ENCODE measurements at regions of chr6 and their contacts with region 1.

Region 1: GRCh38 chr6:36027501-36028087 is at the start of gene MAPK14:
- DNase-seq: peak; percentile 95 to 100 (median 99)

Region 2: GRCh38 chr6:36067374-36068011 is 39.9 kb after region 1 on chr6:
- intact Hi-C with region 1: no loop called
- DNase-seq: no peak

Region 3: GRCh38 chr6:36094753-36095496 is 67.3 kb after region 1 on chr6:
- intact Hi-C with region 1: loop called (anchors 1 kb)
- DNase-seq: peak; percentile 51 to 95 (median 86)

Region 4: DNA sequence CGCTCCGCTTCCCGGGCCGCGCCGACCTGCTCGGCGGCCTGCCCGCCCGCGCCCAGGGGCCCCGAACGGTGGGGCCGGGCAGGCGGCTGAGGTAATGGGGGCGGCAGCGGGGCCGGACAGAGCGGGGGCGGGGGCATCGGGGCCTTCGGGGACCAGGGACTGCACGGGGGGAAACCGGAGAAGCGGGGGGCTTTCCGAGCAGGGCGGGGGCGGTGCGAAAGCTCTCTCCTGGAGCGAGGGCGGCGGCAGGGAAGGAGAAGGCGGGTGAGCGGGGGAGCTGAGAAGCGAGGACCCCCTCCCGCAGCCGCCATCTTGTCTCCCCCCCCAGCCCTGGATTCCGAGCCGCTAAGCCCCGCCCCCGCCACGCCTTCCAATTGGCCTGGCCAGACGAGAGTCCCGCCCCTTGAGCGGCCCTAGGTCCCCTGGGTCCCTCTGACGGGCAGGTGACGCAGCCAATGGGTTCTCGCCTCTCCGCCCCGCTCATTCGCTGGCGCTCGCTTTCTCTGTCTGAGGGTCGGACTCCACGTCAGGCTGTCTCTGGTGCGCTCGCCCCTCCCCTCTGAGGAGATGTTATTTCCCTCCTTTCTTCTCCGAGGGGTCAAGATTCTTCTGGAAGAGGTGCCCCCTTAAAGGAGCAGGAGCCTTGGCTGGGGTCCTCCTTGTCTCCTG is 169.4 kb after region 1 on chr6:
- intact Hi-C with region 1: loop called (anchors 5 kb)
- DNase-seq: peak; percentile 99 to 100 (median 100)

Region 5: DNA sequence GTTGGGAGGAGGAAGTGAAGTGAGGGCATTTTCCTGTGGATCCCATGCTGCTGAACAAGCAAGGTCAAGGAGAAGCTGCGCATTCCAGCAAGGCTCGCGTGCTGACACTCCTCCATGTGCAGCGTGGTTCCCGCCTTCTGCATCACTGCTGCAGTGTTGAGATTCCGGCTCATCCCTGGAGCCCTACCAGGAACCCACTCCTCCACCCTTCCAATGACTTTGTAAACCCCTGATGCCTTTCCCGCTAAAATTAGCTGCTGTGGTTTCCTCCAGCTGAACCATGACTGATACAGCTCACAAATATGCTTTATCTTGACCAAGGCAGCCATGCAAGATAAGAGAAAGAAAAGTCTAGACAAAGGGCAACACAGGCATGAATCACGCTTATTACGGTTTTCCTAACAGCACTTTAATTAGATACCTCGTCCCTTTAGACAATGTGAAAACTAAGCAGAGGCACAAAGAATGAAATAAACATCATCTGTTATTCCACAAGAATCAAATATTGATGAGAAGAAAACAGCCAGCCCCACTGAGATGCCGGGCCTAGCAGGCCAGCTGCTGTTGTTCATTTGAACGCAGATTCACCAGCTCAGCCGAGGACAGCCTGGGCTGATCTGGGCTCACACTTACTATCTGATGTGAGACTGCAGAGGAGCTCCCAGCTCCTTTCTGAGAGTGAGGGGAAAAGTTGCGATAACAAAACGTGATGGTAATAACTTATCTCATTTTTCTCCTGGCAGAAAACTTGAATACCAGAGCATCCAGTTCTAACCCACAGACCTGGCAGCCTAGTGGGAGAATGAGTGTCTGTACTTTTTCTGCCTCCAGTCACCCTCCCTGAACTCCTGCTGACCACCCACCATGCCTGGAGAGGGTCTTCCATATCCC is 323.3 kb after region 1 on chr6:
- intact Hi-C with region 1: loop called (anchors 10 kb)
- DNase-seq: no peak

Measured in head of caudate nucleus (tissue), 42 donors.